ENCODE measurements at regions of chr7 and their contacts with region 1.

Region 1: GRCh38 chr7:90262438-90262837 is 17.5 kb downstream of the CFAP69 start:
- DNase-seq: no peak
- ATAC-seq: peak in 2 of 4 donors; percentile 53 to 68
- H3K4me3 ChIP-seq: no peak overlapping the region
- H3K27ac ChIP-seq: no peak overlapping the region
- H3K4me1 ChIP-seq: no peaks in the 10 kb centered on the region
- H3K27me3 ChIP-seq: no peaks in the 10 kb centered on the region
- CTCF ChIP-seq: peak; percentile 46

Region 2: GRCh38 chr7:90155206-90155605 is 107.2 kb before region 1 on chr7:
- intact Hi-C with region 1: loop called (anchors 5 to 10 kb)
- DNase-seq: no peak
- ATAC-seq: no peak
- H3K4me3 ChIP-seq: no peak overlapping the region
- H3K27ac ChIP-seq: no peak overlapping the region
- H3K4me1 ChIP-seq: no peaks in the 10 kb centered on the region
- H3K27me3 ChIP-seq: no peaks in the 10 kb centered on the region
- CTCF ChIP-seq: no peak

Region 3: GRCh38 chr7:90165724-90166123 is 96.7 kb before region 1 on chr7:
- intact Hi-C with region 1: loop called in 1 of 2 experiments (anchors 10 kb)
- DNase-seq: no peak
- ATAC-seq: no peak
- H3K4me3 ChIP-seq: no peak overlapping the region
- H3K27ac ChIP-seq: no peak overlapping the region
- H3K4me1 ChIP-seq: no peaks in the 10 kb centered on the region
- H3K27me3 ChIP-seq: peaks cover 0 to 3% (median 2%) of the 10 kb centered on the region in 3 donors
- CTCF ChIP-seq: no peak

Region 4: GRCh38 chr7:90337106-90337505 is 74.7 kb after region 1 on chr7:
- intact Hi-C with region 1: no loop called
- DNase-seq: no peak
- ATAC-seq: no peak
- H3K4me3 ChIP-seq: no peak overlapping the region
- H3K27ac ChIP-seq: no peak overlapping the region
- H3K4me1 ChIP-seq: no peaks in the 10 kb centered on the region
- H3K27me3 ChIP-seq: no peaks in the 10 kb centered on the region
- CTCF ChIP-seq: no peak

Region 5: GRCh38 chr7:90383422-90383821 is 121.0 kb after region 1 on chr7:
- intact Hi-C with region 1: no loop called
- DNase-seq: no peak
- ATAC-seq: no peak
- H3K4me3 ChIP-seq: no peak overlapping the region
- H3K27ac ChIP-seq: no peak overlapping the region
- H3K4me1 ChIP-seq: no peaks in the 10 kb centered on the region
- H3K27me3 ChIP-seq: no peaks in the 10 kb centered on the region
- CTCF ChIP-seq: no peak